ENCODE measurements at regions of chr17 and their contacts with region 1.

Region 1: GRCh38 chr17:10737168-10737622 is 7.4 kb upstream of the TMEM220 start:
- DNase-seq: peak; percentile 32
- H3K4me3 ChIP-seq: no peak overlapping the region
- H3K27ac ChIP-seq: no peak overlapping the region
- H3K4me1 ChIP-seq: peaks cover 6% of the 10 kb centered on the region
- H3K27me3 ChIP-seq: no peaks in the 10 kb centered on the region
- CTCF ChIP-seq: peak; percentile 81

Region 2: GRCh38 chr17:10844621-10845387 is 107.6 kb after region 1 on chr17:
- intact Hi-C with region 1: loop called (anchors 2 kb)
- DNase-seq: peak; percentile 74
- H3K4me3 ChIP-seq: peak overlapping the region; percentile 62
- H3K27ac ChIP-seq: no peak overlapping the region
- H3K4me1 ChIP-seq: peaks cover 6% of the 10 kb centered on the region
- H3K27me3 ChIP-seq: peaks cover 22% of the 10 kb centered on the region
- CTCF ChIP-seq: peak; percentile 95